BJ (cell line): ENCODE measurements at regions of chr3 and their contacts with region 1.

Region 1: DNA sequence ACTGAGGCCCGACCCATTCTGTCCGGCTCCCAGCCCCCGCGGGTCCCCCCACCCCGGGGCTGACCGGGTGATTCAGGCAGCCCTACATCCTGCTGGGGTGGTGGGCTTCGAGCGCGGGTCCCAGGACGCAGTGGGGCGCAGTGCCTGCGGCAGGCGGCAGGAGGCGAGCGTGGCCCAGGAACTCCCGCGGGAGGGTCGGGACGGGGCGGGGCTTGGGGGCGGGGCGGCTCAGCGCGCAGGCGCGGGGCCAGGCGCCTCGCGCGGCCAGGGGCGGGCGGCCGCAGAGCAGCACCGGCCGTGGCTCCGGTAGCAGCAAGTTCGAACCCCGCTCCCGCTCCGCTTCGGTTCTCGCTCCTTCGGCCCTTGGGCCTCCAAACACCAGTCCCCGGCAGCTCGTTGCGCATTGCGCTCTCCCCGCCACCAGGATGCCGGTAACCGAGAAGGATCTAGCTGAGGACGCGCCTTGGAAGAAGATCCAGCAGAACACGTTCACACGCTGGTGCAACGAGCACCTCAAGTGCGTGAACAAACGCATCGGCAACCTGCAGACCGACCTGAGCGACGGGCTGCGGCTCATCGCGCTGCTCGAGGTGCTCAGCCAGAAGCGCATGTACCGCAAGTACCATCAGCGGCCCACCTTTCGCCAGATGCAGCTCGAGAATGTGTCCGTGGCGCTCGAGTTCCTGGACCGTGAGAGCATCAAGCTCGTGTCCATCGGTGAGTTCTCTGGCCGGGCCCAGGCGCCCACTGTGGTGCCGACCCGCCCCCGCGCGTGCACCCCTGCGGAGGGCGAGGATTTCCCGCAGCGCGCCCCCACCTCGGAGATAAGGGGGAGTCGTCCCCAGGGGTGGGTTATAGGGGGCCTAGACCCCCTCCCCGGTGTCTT is at the start of gene FLNB:
- DNase-seq: no peak
- H3K4me3 ChIP-seq: peak within 1 kb of the TSS; percentile 90
- H3K27me3 ChIP-seq: no peaks in the 10 kb centered on the region
- CTCF ChIP-seq: peak; percentile 85
- polyA plus RNA-seq, gene FLNB: 73.7 and 111 TPM in 2 replicates

Region 2: GRCh38 chr3:58020783-58021071 is 12.3 kb after region 1 on chr3:
- CTCF ChIA-PET with region 1: interaction called, 14 read pairs
- POLR2A ChIA-PET with region 1: interaction called, 3 read pairs
- DNase-seq: no peak
- H3K4me3 ChIP-seq: no peak overlapping the region
- H3K27me3 ChIP-seq: no peaks in the 10 kb centered on the region
- CTCF ChIP-seq: no peak

Region 3: GRCh38 chr3:58059349-58060321 is 51.3 kb after region 1 on chr3:
- CTCF ChIA-PET with region 1: interaction called, 10 read pairs
- POLR2A ChIA-PET with region 1: interaction called, 4 read pairs
- DNase-seq: peak; percentile 76
- H3K4me3 ChIP-seq: no peak overlapping the region
- H3K27me3 ChIP-seq: no peaks in the 10 kb centered on the region
- CTCF ChIP-seq: no peak